WTC11 (cell line): ENCODE measurements at regions of chr17 and their contacts with region 1.

Region 1: GRCh38 chr17:7336240-7337175 is at the start of gene ACAP1:
- DNase-seq: peak; percentile 78
- ATAC-seq: peak; percentile 96
- H3K4me3 Mint-ChIP-seq: peak within 1 kb of the TSS; percentile 63
- H3K27ac Mint-ChIP-seq: peak within 1 kb of the TSS; percentile 98
- H3K4me1 Mint-ChIP-seq: peaks cover 34% of the 10 kb centered on the region
- H3K27me3 Mint-ChIP-seq: no peaks in the 10 kb centered on the region
- CTCF ChIP-seq: no peak
- total RNA-seq, gene ACAP1: 58.6 to 63.9 TPM (median 60.6 TPM) in 3 replicates

Region 2: DNA sequence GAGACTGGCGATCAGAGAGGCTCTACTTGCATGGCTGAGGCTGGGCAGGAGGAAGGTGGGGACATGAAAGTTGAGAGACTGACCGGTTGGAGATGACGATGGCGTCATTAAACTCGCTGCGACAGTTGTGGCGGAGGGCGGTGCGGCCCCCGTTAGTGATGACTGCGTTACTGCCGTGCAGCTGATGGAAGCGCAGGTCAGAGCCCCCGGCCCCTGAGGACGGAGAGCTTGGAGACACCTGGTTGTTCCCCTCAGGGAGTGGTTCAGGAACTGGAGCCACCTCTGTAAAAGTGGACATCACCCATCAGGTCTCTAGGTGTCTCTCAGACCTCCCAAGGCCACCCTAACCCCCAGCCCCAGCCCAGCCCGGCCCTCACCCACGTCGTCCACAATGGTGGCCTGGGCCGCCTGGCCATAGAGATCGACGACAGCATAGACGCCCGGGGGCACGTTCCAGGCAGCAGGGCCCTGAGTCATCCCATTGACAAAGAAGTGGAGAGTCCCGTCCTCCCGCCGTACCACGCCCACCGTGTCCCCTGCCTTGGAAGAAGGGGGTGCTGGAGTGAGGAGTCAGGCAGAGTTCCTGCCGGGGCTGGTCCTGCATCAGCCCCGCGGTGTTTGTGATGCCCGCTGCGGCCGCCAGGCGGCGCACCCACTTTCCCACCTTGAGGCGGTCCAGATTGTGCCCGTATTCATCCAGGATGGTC is 12.6 kb before region 1 on chr17:
- CTCF ChIA-PET with region 1: interaction called, 12 read pairs
- POLR2A ChIA-PET with region 1: no interaction called
- DNase-seq: peak; percentile 92
- ATAC-seq: peak; percentile 85
- H3K4me3 Mint-ChIP-seq: no peak overlapping the region
- H3K27ac Mint-ChIP-seq: no peak overlapping the region
- H3K4me1 Mint-ChIP-seq: peaks cover 11% of the 10 kb centered on the region
- H3K27me3 Mint-ChIP-seq: no peaks in the 10 kb centered on the region
- CTCF ChIP-seq: peak; percentile 98